Left ventricle myocardium superior (tissue), 1 donor: ENCODE measurements at regions of chr17 and their contacts with region 1.

Region 1: DNA sequence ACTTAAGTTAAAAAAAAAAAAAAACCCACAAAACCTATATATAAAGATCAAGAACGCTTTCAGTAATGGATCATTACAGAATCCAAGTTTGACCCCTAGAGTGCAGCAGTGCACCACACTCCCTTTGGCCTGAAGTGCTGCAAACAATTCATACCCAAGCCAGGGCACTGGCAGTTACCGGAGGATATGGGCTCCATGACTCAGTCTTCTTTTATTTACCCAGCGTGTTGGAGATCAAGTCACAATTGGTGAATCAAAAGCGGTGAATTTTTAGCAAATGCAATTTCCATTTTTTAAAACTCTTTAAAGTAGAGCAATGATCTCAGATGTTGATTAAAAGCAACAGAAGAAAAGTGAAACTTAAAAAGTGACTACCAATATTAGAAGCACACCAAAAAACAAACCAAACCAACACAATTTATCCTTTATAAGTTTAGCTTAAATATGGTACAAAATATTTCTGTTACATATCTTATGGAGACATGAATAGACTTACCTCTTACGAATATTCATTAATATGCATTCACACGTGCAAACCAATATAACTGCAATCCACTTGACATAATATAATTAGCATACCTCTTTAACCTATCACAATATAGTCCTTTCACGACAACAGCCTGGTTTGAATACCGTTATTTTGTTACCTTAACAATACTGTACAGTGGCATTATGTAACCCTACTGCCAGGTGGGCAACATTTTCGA is 46.3 kb downstream of the ZNF652 start:
- DNase-seq: peak; percentile 65
- ATAC-seq: peak; percentile 99

Region 2: GRCh38 chr17:49393491-49394255 is 78.0 kb after region 1 on chr17:
- intact Hi-C with region 1: loop called (anchors 1 kb)
- DNase-seq: no peak
- ATAC-seq: peak; percentile 16

Region 3: DNA sequence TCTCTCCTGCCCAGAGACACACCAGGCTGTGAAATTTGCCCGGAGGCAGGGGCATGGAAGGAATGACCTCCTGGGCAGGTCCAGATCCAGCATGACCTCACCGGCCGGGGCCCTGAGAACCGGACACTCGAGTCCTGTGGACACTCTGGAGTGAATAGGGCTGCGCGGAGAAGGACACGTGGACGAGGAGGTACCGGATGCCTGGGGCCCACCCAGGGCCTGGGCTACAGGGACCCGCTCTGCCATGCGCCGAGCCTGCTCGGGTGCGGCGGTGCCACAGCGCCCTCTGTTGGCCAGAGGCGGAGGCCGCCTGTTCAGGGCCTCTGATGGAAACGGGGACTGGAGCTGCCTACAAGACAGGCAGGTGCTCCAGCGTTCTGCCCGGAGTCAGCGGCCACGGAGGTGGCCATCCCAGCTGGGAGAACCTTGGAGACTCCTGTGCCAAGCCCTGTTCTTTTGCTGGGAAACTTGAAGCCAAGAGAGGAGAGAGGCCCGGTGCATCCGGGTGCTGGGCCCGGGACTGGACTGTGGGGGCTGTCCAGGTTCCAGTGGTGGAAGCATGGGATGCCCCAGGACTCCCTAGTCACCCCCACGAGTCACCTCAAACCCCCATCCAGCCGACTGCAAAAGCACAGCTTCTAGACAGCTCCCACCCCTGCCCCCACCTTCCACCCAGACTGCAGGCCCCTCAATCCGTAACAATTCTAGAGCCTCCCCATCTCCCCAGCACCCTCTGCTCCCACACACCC is 240.7 kb after region 1 on chr17:
- intact Hi-C with region 1: loop called (anchors 10 kb)
- DNase-seq: peak; percentile 87
- ATAC-seq: peak; percentile 91